PC-9 (cell line): ENCODE measurements at regions of chr9 and their contacts with region 1.

Region 1: DNA sequence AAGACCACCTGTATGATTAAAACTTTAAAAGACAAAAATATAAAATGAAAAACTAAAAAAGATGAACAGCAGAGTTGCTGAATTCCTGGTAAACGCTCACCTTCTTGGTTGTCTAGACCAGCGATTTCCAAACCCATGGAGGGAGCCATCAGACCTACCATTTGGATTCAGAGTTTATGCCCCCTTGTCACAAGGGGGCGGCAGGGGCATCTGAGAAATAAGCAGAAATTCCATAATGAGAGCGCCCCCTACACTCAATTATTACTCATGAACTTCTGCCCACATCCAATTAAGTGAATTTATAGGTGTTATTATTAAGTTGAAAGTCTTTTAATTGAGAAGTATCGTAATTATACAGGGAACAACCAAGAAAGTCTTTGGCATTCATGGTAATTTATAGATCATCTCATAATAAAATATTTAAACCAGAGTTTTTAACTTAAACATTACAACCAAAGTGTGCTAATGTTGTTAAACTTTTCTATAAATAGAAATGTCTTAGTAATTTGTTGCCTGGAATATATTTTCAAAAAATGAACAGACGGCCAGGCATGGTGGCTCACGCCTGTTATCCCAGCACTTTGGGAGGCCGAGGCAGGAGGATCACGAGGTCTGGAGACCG is 35.2 kb upstream of the SPATA31C2 start:
- DNase-seq: peak; percentile 70 to 75
- H3K4me3 ChIP-seq: no peak overlapping the region
- H3K27ac ChIP-seq: no peak overlapping the region
- H3K4me1 ChIP-seq: no peaks in the 10 kb centered on the region
- H3K27me3 ChIP-seq: no peaks in the 10 kb centered on the region
- CTCF ChIP-seq: peak; percentile 88

Region 2: DNA sequence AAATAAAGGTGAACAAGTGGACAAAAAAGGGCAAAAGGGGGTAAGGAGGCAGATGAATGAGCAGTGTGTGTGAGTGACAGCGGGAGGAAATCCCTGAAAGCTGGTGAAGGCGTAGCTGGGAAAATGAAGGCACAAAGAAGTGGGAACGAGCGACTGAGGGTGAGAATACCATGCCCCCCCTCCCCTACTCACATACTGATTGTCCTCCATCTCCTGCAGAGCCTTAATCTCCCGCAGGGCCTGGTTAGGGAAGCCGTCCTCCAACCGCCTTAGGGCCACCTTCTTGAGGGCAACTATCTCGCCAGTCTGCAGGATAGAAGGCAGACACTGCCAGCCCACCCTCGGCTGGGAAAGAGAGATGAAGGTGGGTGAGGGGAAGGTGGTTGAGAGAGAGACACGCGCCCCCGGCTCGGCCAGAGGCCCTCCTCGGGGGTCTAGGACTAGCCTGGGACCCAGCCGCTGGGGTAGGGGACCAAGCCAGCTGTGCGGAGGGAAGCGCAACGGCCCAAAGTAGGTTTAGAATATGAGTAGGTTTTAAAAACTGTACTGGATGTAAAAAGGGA is 199.7 kb before region 1 on chr9:
- CTCF ChIA-PET with region 1: no interaction called
- POLR2A ChIA-PET with region 1: no interaction called
- intact Hi-C with region 1: loop called (anchors 10 kb)
- DNase-seq: no peak
- H3K4me3 ChIP-seq: peak overlapping the region; percentile 86
- H3K27ac ChIP-seq: no peak overlapping the region
- H3K4me1 ChIP-seq: peaks cover 11% of the 10 kb centered on the region; the same call in 1 of the 2 replicates
- H3K27me3 ChIP-seq: no peaks in the 10 kb centered on the region
- CTCF ChIP-seq: no peak

Region 3: DNA sequence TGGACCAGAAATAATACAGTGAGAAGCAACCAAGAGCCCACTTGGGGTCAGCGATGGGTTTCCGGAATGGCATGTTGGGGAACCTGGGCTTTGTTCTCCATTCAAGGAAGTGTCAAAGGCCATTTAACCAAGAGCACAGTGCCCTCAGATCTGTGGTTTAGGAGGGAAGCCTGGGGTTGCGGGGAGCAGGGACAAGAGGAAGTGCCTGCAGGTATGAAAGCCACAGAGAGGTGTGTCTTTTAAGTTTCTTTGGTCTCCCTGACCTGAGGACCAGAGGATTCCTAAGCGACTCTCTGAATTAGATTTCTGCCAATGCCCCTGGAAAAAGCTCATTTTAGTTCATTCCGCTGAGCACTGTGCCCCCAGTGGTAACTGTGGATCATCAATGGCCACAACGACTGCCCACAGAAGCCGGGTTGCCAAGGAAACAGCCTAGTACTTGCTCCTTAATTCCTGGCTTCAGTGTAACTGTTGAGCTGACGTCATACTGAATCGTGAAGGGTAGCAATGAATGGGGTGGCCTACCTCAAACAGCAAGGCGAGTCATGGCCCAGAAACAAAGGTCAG is 107.4 kb after region 1 on chr9:
- CTCF ChIA-PET with region 1: no interaction called
- POLR2A ChIA-PET with region 1: no interaction called
- intact Hi-C with region 1: loop called (anchors 1 kb)
- DNase-seq: peak; percentile 77 to 83
- H3K4me3 ChIP-seq: peak overlapping the region; percentile 14; the same call in 1 of the 2 replicates
- H3K27ac ChIP-seq: peak overlapping the region; percentile 60
- H3K4me1 ChIP-seq: peaks cover 30% of the 10 kb centered on the region
- H3K27me3 ChIP-seq: no peaks in the 10 kb centered on the region
- CTCF ChIP-seq: 0 out of 2 replicates have a peak, but pooled peaks have one; percentile 26

Region 4: GRCh38 chr9:88476491-88477271 is 303.2 kb after region 1 on chr9:
- CTCF ChIA-PET with region 1: no interaction called
- POLR2A ChIA-PET with region 1: no interaction called
- intact Hi-C with region 1: loop called (anchors 5 kb)
- DNase-seq: no peak
- H3K4me3 ChIP-seq: no peak overlapping the region
- H3K27ac ChIP-seq: 0 out of 2 replicates have a peak overlapping the region, but pooled peaks have one; percentile 30
- H3K4me1 ChIP-seq: peaks cover 19% of the 10 kb centered on the region
- H3K27me3 ChIP-seq: no peaks in the 10 kb centered on the region
- CTCF ChIP-seq: no peak

Region 5: DNA sequence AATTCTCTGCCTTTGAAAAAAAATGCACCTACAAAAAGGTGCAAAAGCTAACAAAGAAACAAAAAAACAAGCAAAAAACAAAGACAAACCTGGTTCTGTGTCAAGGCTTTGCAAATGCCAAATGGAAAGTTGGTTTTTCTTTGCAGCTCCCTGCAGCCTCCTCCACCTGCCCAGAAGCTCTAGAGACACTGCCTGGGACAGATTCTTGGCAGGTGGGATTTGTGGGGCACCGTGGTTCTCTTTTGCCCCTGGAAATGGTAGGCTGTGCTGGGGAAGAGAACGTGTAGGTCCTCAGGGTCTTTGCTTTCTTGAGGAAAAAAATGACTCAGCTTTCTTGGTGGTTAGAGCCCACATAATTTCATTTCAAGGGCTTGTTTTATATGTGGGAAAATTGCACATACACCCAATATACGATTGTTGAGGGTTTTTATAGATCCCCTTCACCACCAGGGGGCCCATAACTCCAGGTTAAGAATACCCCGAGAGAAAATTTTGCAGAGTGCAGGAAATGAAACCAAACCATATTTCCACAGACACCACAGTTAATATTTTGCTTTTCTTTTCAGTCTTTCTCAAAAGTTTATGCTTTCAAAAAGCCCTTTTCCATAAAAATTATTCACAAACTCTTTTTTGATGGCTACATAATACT is 420.2 kb after region 1 on chr9:
- CTCF ChIA-PET with region 1: no interaction called
- POLR2A ChIA-PET with region 1: no interaction called
- intact Hi-C with region 1: loop called (anchors 5 kb)
- DNase-seq: peak in 1 of 2 experiments; percentile 52
- H3K4me3 ChIP-seq: no peak overlapping the region
- H3K27ac ChIP-seq: no peak overlapping the region
- H3K4me1 ChIP-seq: no peaks in the 10 kb centered on the region
- H3K27me3 ChIP-seq: no peaks in the 10 kb centered on the region
- CTCF ChIP-seq: peak; percentile 86

Region 6: GRCh38 chr9:89008744-89009545 is 835.5 kb after region 1 on chr9:
- CTCF ChIA-PET with region 1: no interaction called
- POLR2A ChIA-PET with region 1: no interaction called
- intact Hi-C with region 1: no loop called
- DNase-seq: no peak
- H3K4me3 ChIP-seq: no peak overlapping the region
- H3K27ac ChIP-seq: no peak overlapping the region
- H3K4me1 ChIP-seq: no peaks in the 10 kb centered on the region
- H3K27me3 ChIP-seq: no peaks in the 10 kb centered on the region
- CTCF ChIP-seq: no peak